Dendritic cell treated with granulocyte-macrophage colony-stimulating factor and Interleukin-4, amounts not matched to agents 40 ng/mL and 50 ng/mL, for 4 days (primary cell): ENCODE measurements at regions of chr2 and their contacts with region 1.

Region 1: GRCh38 chr2:171922230-171923022 is at the start of gene HAT1:
- H3K4me3 Mint-ChIP-seq: peak within 1 kb of the TSS; percentile 97
- H3K27ac Mint-ChIP-seq: peak within 1 kb of the TSS; percentile 98
- H3K4me1 Mint-ChIP-seq: peaks cover 23% of the 10 kb centered on the region
- H3K27me3 Mint-ChIP-seq: no peaks in the 10 kb centered on the region

Region 2: GRCh38 chr2:171878481-171878993 is 43.9 kb before region 1 on chr2:
- intact Hi-C with region 1: no loop called
- H3K4me3 Mint-ChIP-seq: no peak overlapping the region
- H3K27ac Mint-ChIP-seq: no peak overlapping the region
- H3K4me1 Mint-ChIP-seq: no peaks in the 10 kb centered on the region
- H3K27me3 Mint-ChIP-seq: no peaks in the 10 kb centered on the region

Region 3: GRCh38 chr2:171893824-171894611 is 28.4 kb before region 1 on chr2 and contains the start of gene SLC25A12:
- intact Hi-C with region 1: loop called (anchors 1 kb)
- H3K4me3 Mint-ChIP-seq: peak within 1 kb of the TSS; percentile 89
- H3K27ac Mint-ChIP-seq: peak within 1 kb of the TSS; percentile 91
- H3K4me1 Mint-ChIP-seq: peaks cover 18% of the 10 kb centered on the region
- H3K27me3 Mint-ChIP-seq: no peaks in the 10 kb centered on the region

Region 4: GRCh38 chr2:171957061-171957460 is 34.6 kb after region 1 on chr2:
- intact Hi-C with region 1: loop called (anchors 1 kb)
- H3K4me3 Mint-ChIP-seq: no peak overlapping the region
- H3K27ac Mint-ChIP-seq: peak overlapping the region; percentile 89
- H3K4me1 Mint-ChIP-seq: peaks cover 54% of the 10 kb centered on the region
- H3K27me3 Mint-ChIP-seq: no peaks in the 10 kb centered on the region

Region 5: GRCh38 chr2:172084734-172085459 is 162.5 kb after region 1 on chr2:
- intact Hi-C with region 1: loop called (anchors 1 kb)
- H3K4me3 Mint-ChIP-seq: peak overlapping the region; percentile 77
- H3K27ac Mint-ChIP-seq: peak overlapping the region; percentile 68
- H3K4me1 Mint-ChIP-seq: peaks cover 77% of the 10 kb centered on the region
- H3K27me3 Mint-ChIP-seq: peaks cover 97% of the 10 kb centered on the region